Naive thymus-derived CD4-positive, alpha-beta T cell (primary cell): ENCODE measurements at regions of chr7 and their contacts with region 1.

Region 1: DNA sequence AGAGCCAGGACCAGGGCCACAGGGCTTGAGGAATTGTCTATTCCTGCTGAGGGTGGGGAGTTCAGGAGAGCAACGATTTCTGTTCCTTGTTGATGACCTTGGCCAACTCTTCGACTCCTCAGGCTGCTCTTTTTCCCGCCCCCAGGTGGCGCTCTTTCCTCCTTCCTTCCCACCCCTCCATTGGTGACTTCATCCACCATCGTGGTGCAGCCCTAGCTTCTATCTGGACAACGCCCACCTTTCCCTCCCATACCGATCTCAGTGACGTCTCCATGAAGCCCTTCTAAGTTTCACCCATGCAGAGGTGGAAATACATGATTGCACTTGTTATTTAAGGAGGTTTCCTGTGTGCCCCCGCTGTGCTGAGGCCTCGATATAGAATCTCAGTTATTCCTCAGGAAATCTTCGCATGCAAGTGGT is 22.1 kb upstream of the CARD11 start:
- DNase-seq: peak; percentile 32 to 61 (median 50)
- ATAC-seq: peak; percentile 58
- H3K4me3 ChIP-seq: peak overlapping the region; percentile 28
- H3K4me3 Mint-ChIP-seq: peak overlapping the region; percentile 56 to 85 (median 72)
- H3K27ac ChIP-seq: peak overlapping the region; percentile 54
- H3K27ac Mint-ChIP-seq: peak overlapping the region; percentile 68 to 98 (median 91)
- H3K4me1 ChIP-seq: peaks cover 63 to 78% of the 10 kb centered on the region in 2 donors
- H3K4me1 Mint-ChIP-seq: peaks cover 65 to 83% (median 80%) of the 10 kb centered on the region in 7 donors
- H3K27me3 ChIP-seq: no peaks in the 10 kb centered on the region
- H3K27me3 Mint-ChIP-seq: no peaks in the 10 kb centered on the region

Region 2: DNA sequence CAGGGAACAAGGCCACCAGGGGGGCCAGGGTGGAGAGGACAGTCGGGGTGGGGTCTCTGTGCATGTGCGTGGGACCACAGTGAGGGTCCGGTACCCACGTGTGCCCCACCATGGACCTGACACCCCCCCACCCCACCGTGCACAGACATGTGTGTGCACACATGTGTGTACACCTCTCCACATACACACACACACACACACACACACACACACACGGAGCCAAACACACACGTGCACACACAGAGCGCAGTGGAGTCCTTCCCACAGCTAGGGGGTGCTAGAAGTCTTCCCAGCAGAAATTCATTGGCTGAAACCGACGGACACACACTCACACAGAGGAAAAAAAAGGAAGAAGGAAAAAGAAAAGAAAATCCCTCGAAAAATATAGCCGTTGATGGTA is 178.8 kb before region 1 on chr7:
- CTCF ChIA-PET with region 1: interaction called, 3 read pairs
- POLR2A ChIA-PET with region 1: no interaction called
- intact Hi-C with region 1: loop called in 1 of 2 experiments (anchors 1 kb)
- DNase-seq: peak in 8 of 9 donors; percentile 28 to 59 (median 50)
- ATAC-seq: peak; percentile 89
- H3K4me3 ChIP-seq: no peak overlapping the region
- H3K4me3 Mint-ChIP-seq: peak overlapping the region in 4 of 10 donors; percentile 16 to 38 (median 36)
- H3K27ac ChIP-seq: no peak overlapping the region
- H3K27ac Mint-ChIP-seq: peak overlapping the region in 4 of 9 donors; percentile 3 to 57 (median 24)
- H3K4me1 ChIP-seq: no peaks in the 10 kb centered on the region
- H3K4me1 Mint-ChIP-seq: peaks cover 0 to 9% (median 6%) of the 10 kb centered on the region in 7 donors
- H3K27me3 ChIP-seq: no peaks in the 10 kb centered on the region
- H3K27me3 Mint-ChIP-seq: no peaks in the 10 kb centered on the region

Region 3: DNA sequence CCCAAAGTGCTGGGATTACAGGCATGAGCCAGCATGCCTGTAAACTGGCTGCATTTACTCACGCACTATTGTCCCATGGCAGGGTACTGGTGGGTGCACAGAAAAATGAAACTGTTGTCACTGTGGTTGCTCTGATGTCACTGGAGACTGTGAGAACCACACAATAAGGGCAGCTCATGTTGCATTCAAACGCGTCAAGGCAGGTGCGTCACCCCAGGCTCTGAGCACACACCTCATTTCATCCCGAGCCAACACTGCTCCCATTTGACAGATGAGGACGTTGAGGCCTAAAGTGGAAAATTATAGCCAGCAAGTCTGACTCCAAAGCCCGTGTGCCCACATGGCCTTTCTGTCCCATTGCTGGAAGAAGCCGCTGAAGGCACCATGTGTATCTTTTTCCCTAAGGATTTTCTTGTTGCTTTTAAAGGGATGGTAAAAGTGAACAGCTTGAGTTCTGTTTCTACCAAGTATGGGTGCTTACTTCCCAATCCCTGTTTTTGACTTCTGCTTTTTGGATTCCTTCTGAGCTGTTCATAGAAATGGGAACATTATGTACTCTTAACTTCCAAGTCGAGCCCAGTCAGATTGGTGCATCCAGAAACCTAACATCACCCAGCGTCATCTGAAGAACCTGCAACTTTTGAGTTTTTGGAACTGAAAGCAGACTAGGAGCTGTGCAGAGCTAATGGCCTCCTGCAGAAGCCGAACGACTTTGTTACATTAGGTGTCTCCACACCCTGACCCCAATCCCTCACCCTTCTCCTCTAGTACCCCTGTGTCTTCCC is 38.1 kb after region 1 on chr7:
- CTCF ChIA-PET with region 1: interaction called, 4 read pairs
- POLR2A ChIA-PET with region 1: no interaction called
- intact Hi-C with region 1: loop called in 1 of 2 experiments (anchors 5 kb)
- DNase-seq: peak in 1 of 9 donors; percentile 20
- ATAC-seq: peak; percentile 81
- H3K4me3 ChIP-seq: no peak overlapping the region
- H3K4me3 Mint-ChIP-seq: peak overlapping the region in 3 of 10 donors; percentile 27 to 55 (median 44)
- H3K27ac ChIP-seq: no peak overlapping the region
- H3K27ac Mint-ChIP-seq: peak overlapping the region in 7 of 9 donors; percentile 5 to 79 (median 69)
- H3K4me1 ChIP-seq: peaks cover 17 to 29% of the 10 kb centered on the region in 2 donors
- H3K4me1 Mint-ChIP-seq: peaks cover 23 to 79% (median 62%) of the 10 kb centered on the region in 7 donors
- H3K27me3 ChIP-seq: no peaks in the 10 kb centered on the region
- H3K27me3 Mint-ChIP-seq: no peaks in the 10 kb centered on the region

Region 4: DNA sequence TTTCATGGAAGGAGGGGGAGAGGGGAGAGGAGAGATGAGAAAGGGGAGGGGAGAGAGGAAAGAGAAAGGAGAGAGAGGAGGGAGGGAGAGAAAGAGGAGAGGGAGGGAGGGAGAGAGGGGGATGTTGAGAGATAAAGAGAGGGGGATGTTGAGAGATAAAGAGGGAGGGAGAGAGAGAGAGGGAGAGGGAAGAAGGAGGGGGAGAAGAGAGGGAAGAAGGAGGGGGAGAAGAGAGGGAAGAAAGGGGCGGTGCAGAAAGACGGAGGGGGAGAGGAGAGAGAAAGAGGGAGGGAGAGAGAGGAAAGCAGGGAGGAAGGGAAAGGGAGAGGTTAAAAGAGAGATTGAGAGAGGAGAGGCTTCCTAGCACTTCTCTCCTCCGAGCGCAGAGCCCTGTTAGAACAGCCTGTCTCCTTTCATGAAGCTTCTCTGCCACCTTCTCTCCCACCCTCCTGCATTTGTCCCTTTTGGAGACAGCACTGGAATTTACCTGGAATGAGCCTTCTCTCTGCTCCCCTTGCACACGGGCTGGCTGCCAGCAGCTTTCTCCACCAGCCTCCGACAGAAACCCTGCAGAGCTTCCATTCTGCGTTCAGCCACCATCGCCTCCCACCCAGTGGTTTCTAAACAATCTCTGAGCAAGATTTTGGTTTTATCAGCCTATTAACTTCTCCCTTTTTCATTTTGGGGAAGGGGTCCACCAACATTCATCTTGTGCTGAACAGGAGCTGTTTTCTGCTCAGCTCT is 51.9 kb after region 1 on chr7:
- CTCF ChIA-PET with region 1: interaction called, 30 read pairs
- POLR2A ChIA-PET with region 1: interaction called, 9 read pairs
- intact Hi-C with region 1: loop called in 1 of 2 experiments (anchors 1 kb)
- DNase-seq: peak in 6 of 9 donors; percentile 15 to 49 (median 30)
- ATAC-seq: peak; percentile 64
- H3K4me3 ChIP-seq: peak overlapping the region; percentile 28
- H3K4me3 Mint-ChIP-seq: peak overlapping the region in 9 of 10 donors; percentile 75 to 91 (median 84)
- H3K27ac ChIP-seq: peak overlapping the region; percentile 43
- H3K27ac Mint-ChIP-seq: peak overlapping the region in 7 of 9 donors; percentile 72 to 96 (median 92)
- H3K4me1 ChIP-seq: peaks cover 20 to 47% of the 10 kb centered on the region in 2 donors
- H3K4me1 Mint-ChIP-seq: peaks cover 36 to 63% (median 59%) of the 10 kb centered on the region in 7 donors
- H3K27me3 ChIP-seq: no peaks in the 10 kb centered on the region
- H3K27me3 Mint-ChIP-seq: no peaks in the 10 kb centered on the region